ENCODE measurements at regions of chrX and their contacts with region 1.

Region 1: DNA sequence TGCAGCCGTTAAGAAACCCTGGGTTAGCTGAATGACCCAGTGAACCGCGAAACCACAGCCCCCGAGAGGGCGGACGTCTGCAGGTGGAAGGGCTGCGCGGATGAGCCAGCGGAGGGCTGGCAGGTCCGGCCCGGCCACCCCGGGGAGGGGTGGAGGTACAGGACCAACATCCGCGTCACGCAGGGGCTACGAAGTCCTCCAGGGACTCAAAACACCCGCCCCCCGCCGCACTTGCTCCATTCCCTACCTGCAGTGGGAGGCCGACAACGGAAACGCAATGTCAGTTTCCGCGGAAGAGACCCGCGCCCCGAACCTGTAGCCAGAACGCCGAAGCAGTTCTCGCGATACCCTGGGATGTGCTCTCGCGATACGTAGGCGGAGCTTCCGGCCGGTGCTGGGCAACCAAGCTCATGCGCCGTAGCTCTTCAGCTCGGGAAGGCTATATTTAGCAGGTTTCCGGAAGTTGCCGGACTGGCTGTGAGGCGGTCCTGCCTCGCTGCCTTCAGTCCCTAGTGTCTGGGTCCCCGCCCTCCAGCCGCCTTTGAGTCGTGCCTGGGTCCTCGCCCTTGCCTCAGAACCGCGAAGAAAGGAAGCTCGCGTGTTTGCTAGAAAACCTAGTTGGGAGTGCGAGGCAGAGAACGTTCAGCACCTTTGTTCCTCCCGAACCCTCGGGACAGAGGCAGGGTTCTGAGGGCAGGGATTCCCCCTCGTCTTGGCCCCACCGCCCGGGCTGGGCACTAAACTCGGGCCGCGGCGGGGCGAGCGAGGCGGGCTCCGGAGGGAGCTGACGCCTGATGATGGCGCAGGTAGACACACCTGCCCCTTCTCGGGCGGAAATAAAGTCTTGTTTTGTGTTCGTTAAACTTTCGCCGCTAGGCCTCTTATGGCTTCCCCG is at the starts of genes OFD1 and TRAPPC2:
- H3K4me3 ChIP-seq: peak within 1 kb of the TSS; percentile 85
- H3K27ac ChIP-seq: peak within 1 kb of the TSS; percentile 96
- H3K4me1 ChIP-seq: peaks cover 5% of the 10 kb centered on the region; the same call in 1 of the 2 replicates
- CTCF ChIP-seq: no peak; the same call in 1 of the 2 replicates

Region 2: GRCh38 chrX:13387666-13388494 is 346.6 kb before region 1 on chrX:
- CTCF ChIA-PET with region 1: no interaction called
- POLR2A ChIA-PET with region 1: no interaction called
- H3K4me3 ChIP-seq: no peak overlapping the region
- H3K27ac ChIP-seq: peak overlapping the region; percentile 32
- H3K4me1 ChIP-seq: peaks cover 16% of the 10 kb centered on the region
- CTCF ChIP-seq: no peak

Region 3: GRCh38 chrX:13653022-13653693 is 81.4 kb before region 1 on chrX and contains the start of gene TCEANC:
- CTCF ChIA-PET with region 1: interaction called, 4 read pairs
- POLR2A ChIA-PET with region 1: interaction called, 13 read pairs
- H3K4me3 ChIP-seq: peak within 1 kb of the TSS; percentile 51
- H3K27ac ChIP-seq: peak within 1 kb of the TSS; percentile 99
- H3K4me1 ChIP-seq: peaks cover 6% of the 10 kb centered on the region
- CTCF ChIP-seq: no peak; the same call in 1 of the 2 replicates

Region 4: DNA sequence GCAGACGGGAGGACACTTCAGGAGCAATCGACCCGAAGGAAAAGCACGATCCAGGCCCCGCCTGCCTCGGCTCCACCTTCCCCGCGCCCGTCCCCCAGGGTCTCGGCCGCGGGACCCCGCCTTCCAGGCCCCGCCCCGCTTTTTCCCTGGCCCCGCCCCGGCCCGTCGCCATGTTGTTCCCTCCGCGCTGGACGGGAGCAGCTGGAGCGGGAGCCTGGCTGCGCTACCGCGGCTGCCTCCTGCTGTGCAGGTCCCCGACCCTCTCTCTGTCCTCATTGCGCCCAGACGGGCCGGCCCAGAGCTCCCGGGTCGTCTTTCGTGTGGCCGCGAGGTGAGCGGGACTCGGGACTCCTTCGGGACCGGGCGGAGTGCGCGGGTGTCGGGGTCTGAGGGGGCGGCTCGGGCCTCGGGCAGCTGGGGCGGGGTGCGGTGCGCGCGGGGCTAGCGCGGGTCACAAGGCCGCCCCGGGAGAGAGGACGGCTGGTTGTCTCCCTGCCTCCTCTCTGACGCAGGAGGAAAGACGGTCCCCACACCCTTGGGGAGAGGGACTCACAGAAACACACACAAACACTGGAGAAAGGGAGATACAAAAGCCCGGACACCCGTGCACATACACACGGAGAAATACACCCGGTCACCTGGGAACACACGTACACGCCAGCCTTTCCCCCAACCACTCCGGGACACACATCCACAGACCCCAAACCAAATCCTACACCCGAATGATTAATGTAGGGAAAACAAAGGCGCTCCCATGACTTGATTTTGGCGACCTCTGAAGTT is 45.4 kb before region 1 on chrX and contains the start of gene RAB9A:
- CTCF ChIA-PET with region 1: interaction called, 5 read pairs
- POLR2A ChIA-PET with region 1: interaction called, 46 read pairs
- H3K4me3 ChIP-seq: peak within 1 kb of the TSS; percentile 94
- H3K27ac ChIP-seq: peak within 1 kb of the TSS; percentile 98
- H3K4me1 ChIP-seq: peaks cover 44% of the 10 kb centered on the region
- CTCF ChIP-seq: peak; percentile 9; the same call in 1 of the 2 replicates

Region 5: DNA sequence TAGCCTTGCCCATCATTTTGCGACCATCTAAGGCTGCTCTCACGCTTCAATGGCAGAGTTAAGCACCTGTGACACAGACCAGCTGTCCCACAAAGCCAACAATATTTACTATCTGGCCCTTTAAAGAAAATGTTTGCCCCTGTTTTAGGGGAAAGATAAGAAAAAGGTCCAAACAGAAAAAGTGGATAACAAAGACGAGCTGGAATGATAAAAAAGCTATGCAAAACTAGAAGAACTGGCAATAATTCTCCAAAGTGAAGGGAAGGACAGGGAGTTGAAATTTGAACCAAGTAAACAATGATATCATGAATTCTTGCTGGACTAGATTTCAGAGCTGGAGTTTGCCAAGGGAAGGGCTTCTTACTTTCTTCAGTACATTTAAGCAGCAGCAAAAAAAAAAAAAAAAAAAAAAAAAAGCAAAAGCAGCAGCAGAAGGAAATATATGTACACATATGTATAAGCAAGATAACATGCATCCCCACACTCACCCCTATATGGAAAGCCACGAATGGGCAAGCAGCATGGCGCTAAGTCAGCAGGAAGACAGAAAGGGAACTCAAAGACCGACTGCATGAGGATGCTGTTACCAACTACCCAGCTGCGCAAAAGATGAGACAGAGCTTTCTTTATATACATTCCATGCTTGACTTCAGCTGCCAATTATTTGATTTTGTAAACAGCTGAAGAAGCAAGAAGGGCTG is 12.6 kb before region 1 on chrX:
- CTCF ChIA-PET with region 1: interaction called, 5 read pairs
- POLR2A ChIA-PET with region 1: interaction called, 27 read pairs
- H3K4me3 ChIP-seq: no peak overlapping the region
- H3K27ac ChIP-seq: no peak overlapping the region
- H3K4me1 ChIP-seq: peaks cover 6% of the 10 kb centered on the region; the same call in 1 of the 2 replicates
- CTCF ChIP-seq: no peak

Region 6: DNA sequence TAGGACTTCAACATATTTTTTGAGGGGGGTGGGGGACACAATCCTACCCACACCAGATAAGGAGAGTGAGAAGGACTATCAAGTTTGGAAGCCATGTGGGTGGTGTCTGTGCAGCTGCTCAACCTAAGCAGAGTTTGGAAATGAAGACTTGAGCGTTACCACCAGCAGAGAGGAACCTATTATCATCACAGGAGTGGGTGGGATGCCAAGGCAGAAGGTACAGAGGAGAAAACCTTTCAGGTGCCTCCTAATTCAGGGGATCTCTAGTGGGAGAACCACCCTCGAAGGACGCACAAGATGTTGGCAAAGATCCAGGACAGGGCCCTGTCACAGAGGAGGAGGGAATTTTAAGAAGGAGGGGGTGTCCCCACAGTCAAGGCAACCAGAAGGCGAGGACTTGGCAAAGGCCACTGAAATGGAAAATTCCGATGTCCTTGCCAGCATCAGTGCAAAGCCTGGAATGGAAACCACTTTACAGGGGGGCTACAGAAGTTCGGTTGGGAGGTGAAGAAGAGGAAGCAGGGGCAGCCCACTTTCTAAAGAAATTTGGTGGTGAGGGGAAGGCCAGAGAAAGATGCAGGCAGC is 90.7 kb after region 1 on chrX:
- CTCF ChIA-PET with region 1: no interaction called
- POLR2A ChIA-PET with region 1: no interaction called
- H3K4me3 ChIP-seq: no peak overlapping the region
- H3K27ac ChIP-seq: no peak overlapping the region
- H3K4me1 ChIP-seq: no peaks in the 10 kb centered on the region
- CTCF ChIP-seq: no peak

Region 7: GRCh38 chrX:13876652-13877051 is 142.1 kb after region 1 on chrX:
- CTCF ChIA-PET with region 1: no interaction called
- POLR2A ChIA-PET with region 1: no interaction called
- H3K4me3 ChIP-seq: no peak overlapping the region
- H3K27ac ChIP-seq: no peak overlapping the region
- H3K4me1 ChIP-seq: no peaks in the 10 kb centered on the region
- CTCF ChIP-seq: no peak

Region 8: GRCh38 chrX:14029425-14030173 is 295.1 kb after region 1 on chrX and contains the start of gene GEMIN8:
- CTCF ChIA-PET with region 1: interaction called, 5 read pairs
- POLR2A ChIA-PET with region 1: interaction called, 14 read pairs
- H3K4me3 ChIP-seq: peak within 1 kb of the TSS; percentile 51
- H3K27ac ChIP-seq: peak within 1 kb of the TSS; percentile 91
- H3K4me1 ChIP-seq: peaks cover 17% of the 10 kb centered on the region
- CTCF ChIP-seq: peak; percentile 30; the same call in 1 of the 2 replicates